ENCODE measurements at regions of chr5 and their contacts with region 1.

Region 1: GRCh38 chr5:96702503-96703383 is 40.6 kb downstream of the CAST start:
- DNase-seq: peak; percentile 95 to 98 (median 95)
- ATAC-seq: peak; percentile 89 to 98 (median 98)
- H3K4me3 ChIP-seq: peak overlapping the region; percentile 65 to 89 (median 75)
- H3K27ac ChIP-seq: peak overlapping the region; percentile 89 to 99 (median 96)
- H3K4me1 ChIP-seq: peaks cover 0 to 65% (median 45%) of the 10 kb centered on the region in 12 donors
- H3K27me3 ChIP-seq: no peaks in the 10 kb centered on the region
- CTCF ChIP-seq: no peak
- POLR2A ChIP-seq: peak; percentile 57 to 95

Region 2: GRCh38 chr5:96633820-96634219 is 68.9 kb before region 1 on chr5:
- intact Hi-C with region 1: no loop called
- DNase-seq: no peak
- ATAC-seq: peak in 1 of 4 donors; percentile 12
- H3K4me3 ChIP-seq: no peak overlapping the region
- H3K27ac ChIP-seq: peak overlapping the region in 1 of 12 donors; percentile 44
- H3K4me1 ChIP-seq: peaks cover 0 to 14% (median 2%) of the 10 kb centered on the region in 12 donors
- H3K27me3 ChIP-seq: no peaks in the 10 kb centered on the region
- CTCF ChIP-seq: no peak
- POLR2A ChIP-seq: no peak

Region 3: GRCh38 chr5:96662725-96663513 is 39.8 kb before region 1 on chr5:
- intact Hi-C with region 1: loop called in 5 of 10 experiments (anchors 2 to 5 kb)
- DNase-seq: peak; percentile 91 to 96 (median 94)
- ATAC-seq: peak; percentile 87 to 95 (median 94)
- H3K4me3 ChIP-seq: peak overlapping the region; percentile 68 to 99 (median 92)
- H3K27ac ChIP-seq: peak overlapping the region; percentile 88 to 100 (median 98)
- H3K4me1 ChIP-seq: peaks cover 0 to 43% (median 21%) of the 10 kb centered on the region in 12 donors
- H3K27me3 ChIP-seq: no peaks in the 10 kb centered on the region
- CTCF ChIP-seq: no peak
- POLR2A ChIP-seq: peak; percentile 28 to 81

Region 4: DNA sequence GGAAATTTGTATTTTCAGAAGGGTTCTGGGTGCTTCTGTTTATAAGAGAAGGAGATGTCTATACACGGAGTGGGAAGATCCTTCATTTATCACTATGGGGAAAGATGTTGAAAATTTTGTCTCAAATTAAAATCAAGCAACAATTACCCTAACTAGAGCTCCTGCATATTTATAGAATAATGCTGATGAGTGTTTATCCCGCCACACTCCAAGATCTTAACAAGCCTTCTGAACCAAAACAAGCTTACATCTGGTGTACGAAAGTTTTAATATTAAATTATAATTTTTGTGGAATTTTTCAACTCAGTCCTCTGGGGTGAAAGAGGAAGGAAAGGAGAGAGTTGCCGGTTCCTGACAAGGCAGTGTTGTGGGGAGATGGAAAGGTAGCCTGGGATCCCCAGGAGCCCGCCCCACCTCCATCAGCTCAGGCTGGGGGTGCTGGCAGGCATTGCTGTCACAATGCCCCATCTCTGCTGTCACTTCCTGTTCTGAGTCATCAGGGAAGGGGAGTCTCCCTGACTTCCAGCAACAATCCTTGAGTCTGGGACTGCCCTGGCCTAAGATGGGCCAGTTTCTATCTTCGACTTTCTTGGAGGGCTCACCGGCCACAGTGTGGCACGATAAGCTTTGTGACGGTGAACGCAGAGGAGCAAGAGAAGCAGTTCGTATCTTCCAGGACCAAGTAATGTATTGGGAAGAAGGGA is 40.5 kb after region 1 on chr5:
- intact Hi-C with region 1: loop called in 5 of 10 experiments (anchors 5 kb)
- DNase-seq: peak in 3 of 5 donors; percentile 43 to 74 (median 50)
- ATAC-seq: peak; percentile 43 to 70 (median 62)
- H3K4me3 ChIP-seq: peak overlapping the region in 8 of 12 donors; percentile 5 to 34 (median 10)
- H3K27ac ChIP-seq: peak overlapping the region; percentile 66 to 88 (median 79)
- H3K4me1 ChIP-seq: peaks cover 0 to 72% (median 48%) of the 10 kb centered on the region in 12 donors
- H3K27me3 ChIP-seq: no peaks in the 10 kb centered on the region
- CTCF ChIP-seq: no peak
- POLR2A ChIP-seq: peak in 1 of 2 donors; percentile 33

Measured in heart left ventricle (tissue), 16 donors.